ENCODE measurements at regions of chr13 and their contacts with region 1.

Region 1: DNA sequence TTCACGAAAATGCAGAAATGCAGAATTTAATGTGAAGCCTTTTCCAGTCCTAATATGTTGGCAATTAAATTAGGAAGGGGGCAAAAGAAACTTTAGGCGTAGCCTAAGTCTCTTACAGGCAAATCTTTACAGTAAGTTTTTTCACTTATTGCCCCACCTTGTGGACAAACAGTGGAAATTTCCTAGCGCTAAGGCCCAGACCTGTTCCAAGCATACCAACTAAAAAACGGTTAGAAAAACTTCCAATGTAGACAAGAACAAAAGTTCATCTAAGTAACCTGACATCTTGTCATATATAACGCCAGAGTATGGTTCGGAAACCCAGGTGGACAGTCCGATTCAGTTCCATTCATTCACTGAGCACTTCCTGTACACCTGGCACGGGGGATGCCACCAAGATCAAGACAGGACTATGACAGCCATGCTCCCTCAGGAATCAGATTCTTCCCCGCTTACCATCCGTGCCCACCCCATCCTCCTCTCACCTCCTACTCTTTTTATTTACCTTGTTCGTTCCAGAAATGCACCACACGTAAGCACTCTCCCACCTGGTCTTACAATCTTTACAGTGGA is 4.9 kb downstream of the ZAR1L start:
- DNase-seq: no peak
- ATAC-seq: peak; percentile 85
- H3K4me3 ChIP-seq: peak overlapping the region in 1 of 2 donors; percentile 38
- H3K27ac ChIP-seq: no peak overlapping the region
- H3K4me1 ChIP-seq: no peaks in the 10 kb centered on the region
- H3K27me3 ChIP-seq: no peaks in the 10 kb centered on the region

Region 2: DNA sequence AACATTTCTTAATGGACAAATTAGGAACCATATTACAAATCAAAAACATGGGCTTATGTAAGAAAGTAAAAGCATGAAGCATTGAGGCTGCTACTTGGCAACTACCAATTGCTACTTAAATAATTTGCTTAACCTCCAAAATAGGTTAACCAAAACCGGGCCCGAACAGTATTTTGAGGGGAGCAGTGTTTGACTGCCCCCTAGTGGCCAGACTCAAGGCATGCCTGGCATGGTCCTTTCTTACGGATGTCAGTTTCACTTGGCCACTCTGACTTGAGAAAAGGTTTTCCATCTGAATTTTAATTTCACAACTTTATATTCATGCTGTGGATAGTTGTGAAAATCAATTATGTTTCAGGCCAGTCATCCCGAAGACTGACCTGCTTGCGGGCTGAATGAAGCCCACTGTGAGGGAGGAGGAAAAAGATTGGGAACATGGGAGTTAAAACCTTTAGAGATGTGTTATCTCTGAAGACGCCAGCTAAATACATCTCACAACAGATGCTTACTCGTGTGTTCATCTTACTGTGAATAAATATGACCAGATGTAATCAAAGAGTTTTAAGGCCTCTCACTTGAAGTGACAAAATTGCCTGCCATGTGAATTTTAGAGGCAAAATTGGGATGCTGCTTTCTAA is 568.0 kb before region 1 on chr13:
- intact Hi-C with region 1: no loop called
- DNase-seq: peak; percentile 65 to 77
- ATAC-seq: peak; percentile 84
- H3K4me3 ChIP-seq: no peak overlapping the region
- H3K27ac ChIP-seq: no peak overlapping the region
- H3K4me1 ChIP-seq: no peaks in the 10 kb centered on the region
- H3K27me3 ChIP-seq: no peaks in the 10 kb centered on the region

Region 3: GRCh38 chr13:31909864-31910551 is 400.2 kb before region 1 on chr13:
- intact Hi-C with region 1: loop called (anchors 2 to 5 kb)
- DNase-seq: no peak
- ATAC-seq: peak; percentile 58
- H3K4me3 ChIP-seq: no peak overlapping the region
- H3K27ac ChIP-seq: no peak overlapping the region
- H3K4me1 ChIP-seq: no peaks in the 10 kb centered on the region
- H3K27me3 ChIP-seq: no peaks in the 10 kb centered on the region

Region 4: DNA sequence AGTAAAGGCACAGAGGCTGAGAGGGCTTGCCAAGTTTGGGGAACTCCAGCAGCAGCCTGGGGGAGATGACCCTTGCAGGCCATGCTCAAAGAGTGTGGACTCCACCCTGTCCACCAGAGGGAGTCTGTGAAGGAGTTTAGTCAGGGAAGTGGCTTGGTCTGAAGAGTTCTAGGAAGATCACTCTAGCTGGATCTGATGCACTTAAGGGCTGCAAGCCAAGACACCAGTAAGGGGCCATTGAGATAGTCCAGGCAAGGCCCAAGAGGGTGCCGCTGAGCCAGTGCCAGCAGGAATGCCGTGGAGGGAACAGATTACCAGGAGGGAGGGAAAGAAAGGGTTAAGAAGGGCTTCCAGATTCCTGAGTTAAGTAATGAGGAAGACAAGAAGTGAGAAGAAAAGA is 63.8 kb before region 1 on chr13:
- intact Hi-C with region 1: loop called in 1 of 2 experiments (anchors 5 kb)
- DNase-seq: peak in 1 of 2 donors; percentile 78
- ATAC-seq: peak; percentile 84
- H3K4me3 ChIP-seq: no peak overlapping the region
- H3K27ac ChIP-seq: no peak overlapping the region
- H3K4me1 ChIP-seq: peaks cover 0 to 1% of the 10 kb centered on the region in 2 donors
- H3K27me3 ChIP-seq: no peaks in the 10 kb centered on the region

Measured in aorta (tissue), 5 donors.